AG04450 (cell line): ENCODE measurements at regions of chr20 and their contacts with region 1.

Region 1: GRCh38 chr20:57698117-57698866 is 11.5 kb downstream of the PMEPA1 start:
- DNase-seq: peak; percentile 91
- H3K4me3 ChIP-seq: peak overlapping the region; percentile 42
- H3K27ac ChIP-seq: peak overlapping the region; percentile 93
- H3K27me3 ChIP-seq: no peaks in the 10 kb centered on the region
- CTCF ChIP-seq: no peak

Region 2: GRCh38 chr20:57680131-57680716 is 18.1 kb before region 1 on chr20:
- CTCF ChIA-PET with region 1: no interaction called
- POLR2A ChIA-PET with region 1: no interaction called
- DNase-seq: no peak
- H3K4me3 ChIP-seq: no peak overlapping the region
- H3K27ac ChIP-seq: no peak overlapping the region
- H3K27me3 ChIP-seq: no peaks in the 10 kb centered on the region
- CTCF ChIP-seq: no peak

Region 3: DNA sequence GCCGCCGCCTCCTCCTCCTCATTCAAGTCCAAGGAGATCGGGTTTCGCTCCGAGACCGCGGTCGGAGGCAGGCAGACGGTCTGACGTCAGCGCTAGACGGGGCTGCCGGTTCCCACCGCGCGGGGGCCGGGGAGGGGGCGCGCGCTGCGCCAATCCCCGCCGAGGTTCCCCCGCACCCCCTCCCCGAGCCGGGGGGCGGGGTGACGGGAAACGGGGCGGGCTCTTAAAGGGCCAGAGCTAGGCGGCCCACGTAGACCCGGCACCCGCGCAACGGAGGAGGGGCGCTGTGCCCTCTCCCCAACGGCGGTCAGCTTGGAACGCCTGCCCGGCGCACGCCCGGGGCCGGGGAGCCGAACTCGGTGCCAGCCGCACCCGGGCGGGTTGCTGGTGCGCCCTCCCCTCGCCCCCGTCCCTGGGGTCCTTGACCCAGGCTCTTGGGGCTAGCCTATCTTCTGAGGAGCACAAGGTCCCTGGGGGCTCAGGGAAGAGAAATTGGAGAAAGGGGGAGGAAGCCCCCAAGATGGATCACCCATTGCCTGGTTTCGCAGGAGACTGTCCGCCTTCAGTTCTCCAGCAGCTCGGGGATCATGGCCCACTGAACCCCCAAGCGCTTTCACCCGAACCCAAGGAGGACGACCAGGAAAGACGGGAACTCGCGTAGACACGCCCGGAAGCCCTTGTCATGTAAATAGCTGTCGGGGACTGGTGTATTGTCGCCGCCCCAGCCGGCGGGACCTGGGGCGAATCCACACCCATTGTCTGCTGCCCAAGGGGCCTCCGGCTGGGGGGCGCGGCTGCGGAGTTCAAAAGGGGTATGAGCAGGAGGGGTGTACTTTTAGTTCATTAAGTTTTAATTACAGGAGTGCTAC is 11.9 kb after region 1 on chr20 and contains the start of gene PMEPA1:
- CTCF ChIA-PET with region 1: interaction called, 3 read pairs
- POLR2A ChIA-PET with region 1: interaction called, 15 read pairs
- DNase-seq: peak; percentile 85
- H3K4me3 ChIP-seq: peak within 1 kb of the TSS; percentile 65
- H3K27ac ChIP-seq: no peak within 1 kb of the TSS
- H3K27me3 ChIP-seq: peaks cover 6% of the 10 kb centered on the region
- CTCF ChIP-seq: no peak
- polyA plus RNA-seq, gene PMEPA1: 4.3 and 5.6 TPM in 2 replicates